Activated CD4-positive, alpha-beta T cell treated with anti-CD3 and anti-CD28 coated beads, Interleukin-2, amount 10 ng/mL, durations not matched to agents 24 days and 14 days (primary cell): ENCODE measurements at regions of chr1 and their contacts with region 1.

Region 1: DNA sequence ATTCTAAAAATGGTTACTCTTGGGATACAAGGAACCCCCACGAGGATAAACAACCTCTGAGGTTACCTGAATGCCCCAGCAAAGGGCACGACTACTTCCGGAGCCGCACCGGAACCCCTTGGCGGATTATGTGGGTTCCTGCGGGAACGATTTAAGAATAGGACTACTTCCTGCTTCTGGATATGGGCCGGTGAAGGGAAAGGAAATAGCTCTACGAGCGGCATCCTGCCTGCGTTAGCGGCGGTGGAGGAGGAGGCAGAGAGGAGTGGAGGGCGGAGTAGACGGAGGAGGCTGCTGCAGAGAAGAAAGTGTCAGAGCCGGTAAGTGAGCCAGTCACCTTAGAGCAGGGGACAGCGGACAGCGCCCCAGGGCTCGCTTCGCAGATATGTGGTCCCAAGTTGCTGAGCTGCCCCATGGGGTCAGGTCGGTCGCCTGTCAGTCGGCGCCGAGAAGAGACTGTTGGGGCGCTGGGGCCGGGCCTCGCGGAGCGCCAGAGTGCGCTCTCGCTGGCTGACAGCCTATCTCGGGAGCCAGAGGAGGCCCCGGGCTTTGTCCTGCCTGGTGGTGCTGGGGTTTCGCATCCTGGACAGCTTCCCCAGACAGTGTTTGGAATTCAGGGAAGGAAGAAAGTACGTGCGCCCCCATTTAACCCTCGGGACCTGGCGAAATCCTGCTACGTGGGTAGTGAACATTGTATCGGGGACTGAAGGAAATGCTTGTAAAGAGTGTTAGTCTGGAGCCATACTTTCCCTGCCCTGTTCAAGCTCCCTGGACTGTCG is at the start of gene KLHL20:
- DNase-seq: peak; percentile 96
- H3K4me3 Mint-ChIP-seq: peak within 1 kb of the TSS; percentile 96
- H3K27ac Mint-ChIP-seq: peak within 1 kb of the TSS; percentile 95
- H3K4me1 Mint-ChIP-seq: peaks cover 18% of the 10 kb centered on the region
- H3K27me3 Mint-ChIP-seq: peaks cover 23% of the 10 kb centered on the region
- total RNA-seq, gene KLHL20: 15.4 and 17.1 TPM in 2 replicates

Region 2: DNA sequence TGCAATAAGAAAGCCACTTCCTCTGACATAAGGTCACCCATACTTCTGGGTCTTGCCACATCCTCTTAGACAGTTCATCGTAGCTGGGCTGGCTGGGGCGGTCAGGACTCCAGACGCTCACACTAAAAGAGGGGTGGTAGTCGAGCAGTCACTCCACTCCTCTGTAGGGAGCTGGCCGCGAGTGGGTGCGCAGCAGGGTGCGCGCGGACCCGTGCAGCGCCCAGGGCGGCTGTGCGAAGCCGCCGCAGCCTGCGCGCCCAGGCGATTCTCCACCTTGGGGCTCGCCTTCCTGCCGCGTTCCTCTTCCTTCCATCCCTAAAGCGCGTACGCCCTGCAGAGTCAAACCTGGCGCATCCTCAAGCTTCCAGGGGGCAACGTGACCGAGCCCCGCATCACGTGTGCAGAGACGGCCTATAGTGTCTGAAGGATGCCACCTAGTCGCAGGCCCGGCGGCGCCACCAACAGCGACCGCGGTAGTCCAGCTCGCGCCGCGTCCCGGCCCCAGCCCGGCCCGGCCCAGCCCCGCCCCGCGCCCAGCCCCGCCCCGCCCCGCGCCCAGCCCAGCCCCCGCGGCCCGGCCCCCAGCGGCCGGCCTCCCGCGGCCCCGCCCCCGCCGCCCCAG is 238.2 kb before region 1 on chr1:
- intact Hi-C with region 1: loop called (anchors 1 kb)
- DNase-seq: peak; percentile 92
- H3K4me3 Mint-ChIP-seq: peak overlapping the region; percentile 92
- H3K27ac Mint-ChIP-seq: peak overlapping the region; percentile 96
- H3K4me1 Mint-ChIP-seq: peaks cover 48% of the 10 kb centered on the region
- H3K27me3 Mint-ChIP-seq: no peaks in the 10 kb centered on the region

Region 3: GRCh38 chr1:173824331-173825081 is 109.6 kb after region 1 on chr1 and contains the starts of genes CENPL and DARS2:
- intact Hi-C with region 1: loop called (anchors 1 kb)
- DNase-seq: peak; percentile 97
- H3K4me3 Mint-ChIP-seq: peak within 1 kb of the TSS; percentile 99
- H3K27ac Mint-ChIP-seq: peak within 1 kb of the TSS; percentile 98
- H3K4me1 Mint-ChIP-seq: peaks cover 49% of the 10 kb centered on the region
- H3K27me3 Mint-ChIP-seq: no peaks in the 10 kb centered on the region
- total RNA-seq, gene CENPL: 23.2 and 24.4 TPM in 2 replicates
- total RNA-seq, gene DARS2: 47.6 and 52.2 TPM in 2 replicates